MCF 10A (cell line): ENCODE measurements at regions of chr6 and their contacts with region 1.

Region 1: GRCh38 chr6:118787724-118788423 is 106.1 kb upstream of the ASF1A start:
- DNase-seq: no peak
- H3K4me3 Mint-ChIP-seq: no peak overlapping the region
- H3K27ac Mint-ChIP-seq: no peak overlapping the region
- H3K4me1 Mint-ChIP-seq: peaks cover 7% of the 10 kb centered on the region
- H3K27me3 Mint-ChIP-seq: no peaks in the 10 kb centered on the region
- CTCF ChIP-seq: no peak

Region 2: GRCh38 chr6:118776607-118777549 is 11.0 kb before region 1 on chr6:
- CTCF ChIA-PET with region 1: interaction called, 12 read pairs
- POLR2A ChIA-PET with region 1: no interaction called
- intact Hi-C with region 1: no loop called
- DNase-seq: peak; percentile 85
- H3K4me3 Mint-ChIP-seq: peak overlapping the region; percentile 49
- H3K27ac Mint-ChIP-seq: no peak overlapping the region
- H3K4me1 Mint-ChIP-seq: peaks cover 13% of the 10 kb centered on the region
- H3K27me3 Mint-ChIP-seq: no peaks in the 10 kb centered on the region
- CTCF ChIP-seq: peak; percentile 51

Region 3: GRCh38 chr6:118800394-118801071 is 12.7 kb after region 1 on chr6:
- CTCF ChIA-PET with region 1: interaction called, 30 read pairs
- POLR2A ChIA-PET with region 1: interaction called, 3 read pairs
- intact Hi-C with region 1: no loop called
- DNase-seq: peak; percentile 86
- H3K4me3 Mint-ChIP-seq: no peak overlapping the region
- H3K27ac Mint-ChIP-seq: no peak overlapping the region
- H3K4me1 Mint-ChIP-seq: peaks cover 7% of the 10 kb centered on the region
- H3K27me3 Mint-ChIP-seq: no peaks in the 10 kb centered on the region
- CTCF ChIP-seq: peak; percentile 81

Region 4: DNA sequence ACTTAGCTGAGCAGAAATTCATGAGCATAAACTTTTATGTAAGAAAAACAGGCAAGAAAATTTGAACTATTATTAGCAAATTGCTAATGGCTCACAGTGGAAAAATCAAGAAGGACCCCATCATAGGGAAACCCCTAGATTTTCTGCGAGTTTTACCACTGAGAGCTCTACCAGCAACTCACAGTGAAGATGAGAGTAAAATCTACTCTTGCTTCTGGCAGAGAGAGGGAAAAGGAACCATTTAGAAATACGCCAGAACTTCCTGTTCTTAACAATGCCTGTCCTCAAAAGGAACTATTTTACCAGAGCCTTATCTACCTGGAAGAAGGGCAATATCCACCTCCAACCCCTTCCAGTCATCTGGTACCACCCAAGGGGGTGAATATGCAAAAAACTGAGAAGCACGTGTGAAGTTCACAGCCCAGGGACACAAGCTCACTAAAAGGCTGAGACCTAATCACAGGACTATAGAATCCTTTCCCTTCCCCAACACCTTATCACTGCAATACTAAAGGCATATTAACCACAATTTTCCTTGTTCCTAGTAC is 71.7 kb after region 1 on chr6:
- CTCF ChIA-PET with region 1: no interaction called
- POLR2A ChIA-PET with region 1: no interaction called
- intact Hi-C with region 1: no loop called
- DNase-seq: no peak
- H3K4me3 Mint-ChIP-seq: no peak overlapping the region
- H3K27ac Mint-ChIP-seq: no peak overlapping the region
- H3K4me1 Mint-ChIP-seq: peaks cover 5% of the 10 kb centered on the region
- H3K27me3 Mint-ChIP-seq: no peaks in the 10 kb centered on the region
- CTCF ChIP-seq: no peak

Region 5: DNA sequence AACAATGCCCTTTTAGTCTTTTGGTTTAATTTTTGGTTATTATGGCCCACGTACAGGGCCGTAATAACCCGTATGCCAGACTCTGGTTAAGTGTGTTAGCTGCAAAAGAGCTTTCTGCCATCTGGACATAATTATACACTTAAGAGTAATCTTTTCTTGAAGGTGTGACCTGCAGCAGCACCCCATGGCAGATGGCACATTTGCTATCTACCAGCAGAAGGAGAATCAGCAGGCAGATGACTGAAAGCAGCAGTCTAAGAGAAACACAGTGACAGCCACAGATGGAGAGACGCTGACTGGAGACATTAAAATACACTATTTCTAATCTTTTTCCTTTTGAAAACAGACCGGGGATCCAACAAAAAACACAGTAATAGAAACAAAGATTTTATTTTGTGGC is 124.8 kb after region 1 on chr6:
- CTCF ChIA-PET with region 1: no interaction called
- POLR2A ChIA-PET with region 1: no interaction called
- intact Hi-C with region 1: no loop called
- DNase-seq: no peak
- H3K4me3 Mint-ChIP-seq: no peak overlapping the region
- H3K27ac Mint-ChIP-seq: no peak overlapping the region
- H3K4me1 Mint-ChIP-seq: no peaks in the 10 kb centered on the region
- H3K27me3 Mint-ChIP-seq: no peaks in the 10 kb centered on the region
- CTCF ChIP-seq: no peak